ENCODE measurements at regions of chr14 and their contacts with region 1.

Region 1: DNA sequence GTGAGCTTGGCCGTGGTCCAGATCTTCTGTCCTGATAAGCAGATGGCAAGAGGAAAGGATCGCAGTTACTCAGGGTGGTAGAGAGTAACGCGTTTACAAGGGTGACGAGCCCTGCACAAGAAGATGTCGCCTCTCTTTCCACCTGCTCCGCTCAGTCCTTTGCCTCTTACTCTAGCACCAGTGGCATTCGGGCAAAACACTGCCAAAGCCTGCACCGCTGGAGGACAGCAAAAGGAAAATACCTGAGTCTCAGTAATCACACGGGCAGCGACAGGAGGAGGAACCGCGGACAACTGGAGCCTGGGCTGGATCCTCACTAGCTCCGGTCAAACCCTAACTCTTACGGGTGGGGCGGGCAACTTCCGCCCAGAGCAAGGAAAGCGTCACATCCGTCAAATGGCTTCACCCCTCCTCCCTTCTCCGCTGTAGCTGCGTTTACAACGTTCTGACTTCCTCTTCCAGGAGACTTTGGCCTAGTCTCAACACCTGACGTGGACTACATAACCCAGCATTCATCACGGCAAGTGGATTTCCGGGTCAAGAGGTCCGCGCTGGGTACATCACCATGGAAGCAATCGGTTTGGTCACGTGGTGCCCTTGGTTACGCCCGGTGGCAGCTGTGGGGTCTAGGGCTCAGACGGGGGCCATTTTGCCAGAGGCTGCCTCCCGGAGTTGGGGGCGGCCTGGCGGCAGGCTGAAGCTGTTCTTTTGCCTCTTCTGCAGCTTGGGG is at the starts of genes KLHL28 and TOGARAM1:
- DNase-seq: peak; percentile 99
- ATAC-seq: peak; percentile 93
- H3K4me3 Mint-ChIP-seq: no peak within 1 kb of the TSS
- H3K27ac Mint-ChIP-seq: no peak within 1 kb of the TSS
- H3K4me1 Mint-ChIP-seq: peaks cover 58% of the 10 kb centered on the region
- H3K27me3 Mint-ChIP-seq: no peaks in the 10 kb centered on the region
- CTCF ChIP-seq: no peak
- total RNA-seq, gene KLHL28: 10.9 to 11.1 TPM
- total RNA-seq, gene TOGARAM1: 5.5 to 7.9 TPM

Region 2: GRCh38 chr14:44897045-44897844 is 64.5 kb before region 1 on chr14:
- CTCF ChIA-PET with region 1: no interaction called
- POLR2A ChIA-PET with region 1: interaction called, 3 read pairs
- intact Hi-C with region 1: loop called (anchors 2 kb)
- DNase-seq: peak; percentile 99
- ATAC-seq: peak; percentile 98
- H3K4me3 Mint-ChIP-seq: peak overlapping the region; percentile 82
- H3K27ac Mint-ChIP-seq: peak overlapping the region; percentile 91
- H3K4me1 Mint-ChIP-seq: peaks cover 15% of the 10 kb centered on the region
- H3K27me3 Mint-ChIP-seq: no peaks in the 10 kb centered on the region
- CTCF ChIP-seq: no peak

Region 3: GRCh38 chr14:44979740-44980356 is 18.1 kb after region 1 on chr14:
- CTCF ChIA-PET with region 1: interaction called, 5 read pairs
- POLR2A ChIA-PET with region 1: interaction called, 14 read pairs
- intact Hi-C with region 1: no loop called
- DNase-seq: no peak
- ATAC-seq: no peak
- H3K4me3 Mint-ChIP-seq: no peak overlapping the region
- H3K27ac Mint-ChIP-seq: no peak overlapping the region
- H3K4me1 Mint-ChIP-seq: peaks cover 30% of the 10 kb centered on the region
- H3K27me3 Mint-ChIP-seq: no peaks in the 10 kb centered on the region
- CTCF ChIP-seq: no peak

Region 4: GRCh38 chr14:45083971-45084722 is 122.4 kb after region 1 on chr14 and contains the start of gene PRPF39:
- CTCF ChIA-PET with region 1: interaction called, 4 read pairs
- POLR2A ChIA-PET with region 1: interaction called, 21 read pairs
- intact Hi-C with region 1: loop called (anchors 5 kb)
- DNase-seq: peak; percentile 95
- ATAC-seq: peak; percentile 97
- H3K4me3 Mint-ChIP-seq: peak within 1 kb of the TSS; percentile 93
- H3K27ac Mint-ChIP-seq: peak within 1 kb of the TSS; percentile 94
- H3K4me1 Mint-ChIP-seq: peaks cover 47% of the 10 kb centered on the region
- H3K27me3 Mint-ChIP-seq: no peaks in the 10 kb centered on the region
- CTCF ChIP-seq: no peak
- total RNA-seq, gene PRPF39: 45.7 to 48.3 TPM

Region 5: GRCh38 chr14:45089813-45090212 is 128.0 kb after region 1 on chr14:
- CTCF ChIA-PET with region 1: interaction called, 4 read pairs
- POLR2A ChIA-PET with region 1: interaction called, 21 read pairs
- intact Hi-C with region 1: loop called (anchors 5 kb)
- DNase-seq: peak; percentile 27
- ATAC-seq: peak; percentile 98
- H3K4me3 Mint-ChIP-seq: peak overlapping the region; percentile 24
- H3K27ac Mint-ChIP-seq: peak overlapping the region; percentile 89
- H3K4me1 Mint-ChIP-seq: peaks cover 74% of the 10 kb centered on the region
- H3K27me3 Mint-ChIP-seq: no peaks in the 10 kb centered on the region
- CTCF ChIP-seq: no peak

Region 6: GRCh38 chr14:45134051-45134958 is 172.5 kb after region 1 on chr14 and contains the start of gene FKBP3:
- CTCF ChIA-PET with region 1: no interaction called
- POLR2A ChIA-PET with region 1: interaction called, 4 read pairs
- intact Hi-C with region 1: loop called (anchors 2 kb)
- DNase-seq: peak; percentile 97
- ATAC-seq: peak; percentile 95
- H3K4me3 Mint-ChIP-seq: peak within 1 kb of the TSS; percentile 99
- H3K27ac Mint-ChIP-seq: peak within 1 kb of the TSS; percentile 98
- H3K4me1 Mint-ChIP-seq: peaks cover 28% of the 10 kb centered on the region
- H3K27me3 Mint-ChIP-seq: no peaks in the 10 kb centered on the region
- CTCF ChIP-seq: no peak
- total RNA-seq, gene FKBP3: 65.6 to 66.4 TPM

Region 7: GRCh38 chr14:45253068-45253753 is 291.4 kb after region 1 on chr14 and contains the start of gene MIS18BP1:
- CTCF ChIA-PET with region 1: no interaction called
- POLR2A ChIA-PET with region 1: no interaction called
- intact Hi-C with region 1: loop called (anchors 5 kb)
- DNase-seq: peak; percentile 97
- ATAC-seq: peak; percentile 93
- H3K4me3 Mint-ChIP-seq: peak within 1 kb of the TSS; percentile 91
- H3K27ac Mint-ChIP-seq: peak within 1 kb of the TSS; percentile 96
- H3K4me1 Mint-ChIP-seq: peaks cover 24% of the 10 kb centered on the region
- H3K27me3 Mint-ChIP-seq: no peaks in the 10 kb centered on the region
- CTCF ChIP-seq: peak; percentile 76
- total RNA-seq, gene MIS18BP1: 51.0 to 55.8 TPM

Measured in activated CD8-positive, alpha-beta T cell treated with anti-CD3 and anti-CD28 coated beads for 36 hours (primary cell).